ENCODE measurements at regions of chr17 and their contacts with region 1.

Region 1: DNA sequence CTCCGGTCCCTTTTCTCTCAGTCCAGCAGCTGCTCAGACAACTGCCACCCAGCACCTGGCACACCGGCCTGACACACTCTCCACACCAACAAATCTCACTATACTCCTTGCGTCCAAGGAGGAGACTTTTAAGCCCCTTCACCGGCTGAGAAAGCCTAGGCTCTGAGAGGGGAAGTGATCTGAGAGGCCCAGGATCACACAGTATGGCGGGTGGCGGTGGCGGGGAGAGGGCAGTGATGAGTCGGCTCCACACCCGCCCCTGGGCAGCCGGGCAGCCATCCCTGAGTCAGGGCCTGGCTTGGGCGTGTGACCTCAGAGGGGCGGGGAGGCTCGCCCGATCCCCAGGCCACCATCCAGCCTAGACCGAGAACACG is 569 bp downstream of the FLII start:
- DNase-seq: peak; percentile 62
- ATAC-seq: peak; percentile 72
- H3K4me3 ChIP-seq: peak overlapping the region; percentile 100
- H3K27ac ChIP-seq: peak overlapping the region; percentile 94
- H3K4me1 ChIP-seq: peaks cover 18% of the 10 kb centered on the region
- H3K27me3 ChIP-seq: no peaks in the 10 kb centered on the region
- CTCF ChIP-seq: no peak
- POLR2A ChIP-seq: no peak
- RAD21 ChIP-seq: no peak

Region 2: GRCh38 chr17:18166894-18167293 is 91.1 kb before region 1 on chr17:
- CTCF ChIA-PET with region 1: no interaction called
- POLR2A ChIA-PET with region 1: no interaction called
- dilution Hi-C with region 1: no loop called
- in situ Hi-C with region 1: no loop called
- intact Hi-C with region 1: no loop called
- DNase-seq: no peak
- ATAC-seq: no peak
- H3K4me3 ChIP-seq: no peak overlapping the region
- H3K27ac ChIP-seq: no peak overlapping the region
- H3K4me1 ChIP-seq: no peaks in the 10 kb centered on the region; the same call in 1 of the 2 replicates
- H3K27me3 ChIP-seq: peaks cover 4% of the 10 kb centered on the region; the same call in 1 of the 2 replicates
- CTCF ChIP-seq: peak; percentile 12; the same call in 1 of the 2 replicates
- POLR2A ChIP-seq: no peak
- RAD21 ChIP-seq: no peak

Region 3: DNA sequence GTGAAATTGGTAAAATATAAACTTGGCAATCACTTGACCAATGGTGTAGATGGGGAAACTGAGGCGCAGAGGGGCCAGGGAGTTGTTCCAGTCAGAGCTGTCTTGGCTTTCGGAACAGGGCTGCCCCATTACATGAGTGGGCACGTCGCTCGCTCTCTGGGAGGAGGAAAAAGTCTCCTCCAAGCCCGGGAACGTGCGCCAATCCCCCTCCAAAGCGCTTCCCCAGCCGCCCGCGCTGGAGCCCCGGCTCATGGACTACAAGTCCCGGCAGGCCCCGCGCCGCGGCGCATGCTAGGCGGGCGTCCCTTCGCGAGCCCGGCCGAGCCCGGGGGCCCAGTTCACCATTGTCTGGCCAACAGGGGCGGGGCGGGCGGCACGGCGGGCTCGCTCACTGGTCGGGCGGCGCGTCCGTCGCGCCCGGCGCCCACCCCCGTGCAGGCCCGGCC is 32.8 kb before region 1 on chr17:
- CTCF ChIA-PET with region 1: no interaction called
- POLR2A ChIA-PET with region 1: no interaction called
- dilution Hi-C with region 1: no loop called
- in situ Hi-C with region 1: no loop called
- intact Hi-C with region 1: loop called (anchors 2 kb)
- DNase-seq: peak; percentile 93
- ATAC-seq: peak; percentile 95
- H3K4me3 ChIP-seq: peak overlapping the region; percentile 37
- H3K27ac ChIP-seq: peak overlapping the region; percentile 71
- H3K4me1 ChIP-seq: peaks cover 23% of the 10 kb centered on the region
- H3K27me3 ChIP-seq: no peaks in the 10 kb centered on the region
- CTCF ChIP-seq: no peak
- POLR2A ChIP-seq: no peak
- RAD21 ChIP-seq: no peak

Region 4: GRCh38 chr17:18235743-18236256 is 22.2 kb before region 1 on chr17:
- CTCF ChIA-PET with region 1: no interaction called
- POLR2A ChIA-PET with region 1: no interaction called
- dilution Hi-C with region 1: no loop called
- in situ Hi-C with region 1: no loop called
- intact Hi-C with region 1: no loop called
- DNase-seq: peak; percentile 67
- ATAC-seq: peak; percentile 62
- H3K4me3 ChIP-seq: no peak overlapping the region
- H3K27ac ChIP-seq: peak overlapping the region; percentile 24; the same call in 1 of the 2 replicates
- H3K4me1 ChIP-seq: peaks cover 5% of the 10 kb centered on the region
- H3K27me3 ChIP-seq: no peaks in the 10 kb centered on the region
- CTCF ChIP-seq: no peak
- POLR2A ChIP-seq: no peak; the same call in 1 of the 2 replicates
- RAD21 ChIP-seq: no peak

Measured in IMR-90 (cell line).